ENCODE measurements at regions of chr9 and their contacts with region 1.

Region 1: DNA sequence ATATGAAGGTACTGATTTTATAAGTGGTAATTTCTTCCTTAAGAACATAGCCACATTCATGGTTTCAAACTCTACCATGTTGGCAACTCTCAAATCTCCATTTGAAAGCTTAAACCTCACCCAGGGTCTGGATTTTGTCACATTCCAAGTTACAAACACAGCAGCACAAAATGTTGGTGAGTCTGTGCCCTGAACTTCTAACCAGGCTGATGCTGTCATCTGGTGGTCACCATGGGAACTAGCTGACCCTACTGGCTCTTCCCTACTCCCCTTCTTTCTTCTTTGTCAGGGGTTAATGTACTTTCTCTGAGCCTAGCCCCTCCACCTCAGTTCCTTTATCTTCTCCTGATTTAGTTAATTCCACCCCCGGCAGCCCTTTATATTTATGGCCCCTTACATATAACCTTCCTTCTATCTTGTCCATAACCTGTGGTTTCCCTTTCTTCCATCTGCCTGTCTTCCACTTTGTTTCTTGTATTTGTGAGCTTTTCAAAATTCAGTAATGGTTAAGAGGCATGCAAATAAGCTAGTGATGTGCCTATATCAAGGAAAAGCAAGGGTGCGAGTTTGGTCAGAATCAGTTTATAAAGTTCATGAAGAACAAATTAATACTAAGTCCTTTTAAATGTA is 35.9 kb downstream of the TGFBR1 start:
- DNase-seq: peak; percentile 30
- H3K4me3 ChIP-seq: no peak overlapping the region
- H3K27ac ChIP-seq: no peak overlapping the region
- H3K4me1 ChIP-seq: no peaks in the 10 kb centered on the region
- H3K27me3 ChIP-seq: no peaks in the 10 kb centered on the region
- CTCF ChIP-seq: peak; percentile 63 to 73
- POLR2A ChIP-seq: no peak

Region 2: GRCh38 chr9:98974994-98975712 is 165.6 kb before region 1 on chr9:
- CTCF ChIA-PET with region 1: interaction called, 10 read pairs
- POLR2A ChIA-PET with region 1: no interaction called
- dilution Hi-C with region 1: no loop called
- intact Hi-C with region 1: loop called (anchors 1 kb)
- DNase-seq: peak; percentile 58
- H3K4me3 ChIP-seq: no peak overlapping the region
- H3K27ac ChIP-seq: no peak overlapping the region
- H3K4me1 ChIP-seq: no peaks in the 10 kb centered on the region
- H3K27me3 ChIP-seq: peaks cover 0 to 3% of the 10 kb centered on the region in 2 experiments
- CTCF ChIP-seq: peak; percentile 95 to 100
- POLR2A ChIP-seq: no peak

Region 3: GRCh38 chr9:99104459-99105151 is 36.2 kb before region 1 on chr9 and contains the start of gene TGFBR1:
- CTCF ChIA-PET with region 1: interaction called, 10 read pairs
- POLR2A ChIA-PET with region 1: no interaction called
- dilution Hi-C with region 1: no loop called
- intact Hi-C with region 1: no loop called
- DNase-seq: peak; percentile 92
- H3K4me3 ChIP-seq: peak within 1 kb of the TSS; percentile 42 to 84 (median 57)
- H3K27ac ChIP-seq: peak within 1 kb of the TSS; percentile 38
- H3K4me1 ChIP-seq: peaks cover 13% of the 10 kb centered on the region
- H3K27me3 ChIP-seq: no peaks in the 10 kb centered on the region
- CTCF ChIP-seq: no peak
- POLR2A ChIP-seq: no peak
- total RNA-seq, gene TGFBR1: 17.7 and 18.6 TPM in 2 replicates

Region 4: GRCh38 chr9:99732715-99733114 is 591.9 kb after region 1 on chr9:
- CTCF ChIA-PET with region 1: no interaction called
- POLR2A ChIA-PET with region 1: no interaction called
- dilution Hi-C with region 1: no loop called
- intact Hi-C with region 1: loop called (anchors 1 kb)
- DNase-seq: peak; percentile 69
- H3K4me3 ChIP-seq: no peak overlapping the region
- H3K27ac ChIP-seq: no peak overlapping the region
- H3K4me1 ChIP-seq: no peaks in the 10 kb centered on the region
- H3K27me3 ChIP-seq: no peaks in the 10 kb centered on the region
- CTCF ChIP-seq: no peak
- POLR2A ChIP-seq: no peak

Measured in endothelial cell of umbilical vein (primary cell).